ENCODE measurements at regions of chr5 and their contacts with region 1.

Region 1: GRCh38 chr5:154801083-154801482 is 45.9 kb downstream of the LARP1 start:
- DNase-seq: no peak

Region 2: DNA sequence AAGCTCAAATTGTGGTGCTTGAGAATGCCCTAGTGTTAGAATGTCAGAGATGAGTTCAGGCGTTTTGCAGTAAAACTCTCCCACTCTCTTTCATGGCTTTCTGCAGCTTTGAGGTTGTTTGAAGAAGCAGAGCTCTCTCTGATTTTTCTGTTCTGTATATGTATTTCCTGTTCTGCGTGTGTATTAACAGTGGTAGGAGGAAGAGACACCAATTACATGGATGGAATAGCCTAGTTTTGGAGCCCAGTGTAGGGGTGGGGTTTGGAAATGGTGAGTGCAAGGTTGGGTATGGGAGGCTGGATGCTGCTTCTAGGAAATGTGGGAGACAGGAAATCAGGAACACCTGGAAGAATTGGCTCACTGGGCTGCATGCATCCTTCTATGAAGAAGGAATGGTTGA is 33.5 kb before region 1 on chr5:
- intact Hi-C with region 1: loop called (anchors 5 kb)
- DNase-seq: no peak

Measured in cardiac septum (tissue), 1 donor.